Posterior vena cava (tissue), 2 donors: ENCODE measurements at regions of chr2 and their contacts with region 1.

Region 1: DNA sequence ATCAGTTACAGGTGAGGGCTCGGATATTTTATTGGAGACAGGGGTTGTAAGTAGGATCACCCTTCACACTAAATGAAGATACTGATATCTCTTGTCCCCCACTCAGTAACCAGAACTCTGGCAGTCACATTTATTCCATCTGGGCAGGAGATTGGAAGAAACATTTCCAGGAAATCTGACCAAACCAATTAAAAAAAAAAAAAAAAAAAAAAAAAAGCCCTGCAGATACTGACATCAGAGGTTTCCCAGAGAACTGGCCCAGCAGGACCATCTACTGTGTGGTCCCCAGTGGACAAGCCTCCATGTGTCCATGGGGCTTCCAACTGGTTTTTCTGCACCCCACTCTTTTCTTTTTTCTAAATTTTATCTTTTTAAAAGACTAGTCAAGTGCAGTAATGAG is 41.3 kb downstream of the SH2D6 start:
- DNase-seq: peak; percentile 32

Region 2: DNA sequence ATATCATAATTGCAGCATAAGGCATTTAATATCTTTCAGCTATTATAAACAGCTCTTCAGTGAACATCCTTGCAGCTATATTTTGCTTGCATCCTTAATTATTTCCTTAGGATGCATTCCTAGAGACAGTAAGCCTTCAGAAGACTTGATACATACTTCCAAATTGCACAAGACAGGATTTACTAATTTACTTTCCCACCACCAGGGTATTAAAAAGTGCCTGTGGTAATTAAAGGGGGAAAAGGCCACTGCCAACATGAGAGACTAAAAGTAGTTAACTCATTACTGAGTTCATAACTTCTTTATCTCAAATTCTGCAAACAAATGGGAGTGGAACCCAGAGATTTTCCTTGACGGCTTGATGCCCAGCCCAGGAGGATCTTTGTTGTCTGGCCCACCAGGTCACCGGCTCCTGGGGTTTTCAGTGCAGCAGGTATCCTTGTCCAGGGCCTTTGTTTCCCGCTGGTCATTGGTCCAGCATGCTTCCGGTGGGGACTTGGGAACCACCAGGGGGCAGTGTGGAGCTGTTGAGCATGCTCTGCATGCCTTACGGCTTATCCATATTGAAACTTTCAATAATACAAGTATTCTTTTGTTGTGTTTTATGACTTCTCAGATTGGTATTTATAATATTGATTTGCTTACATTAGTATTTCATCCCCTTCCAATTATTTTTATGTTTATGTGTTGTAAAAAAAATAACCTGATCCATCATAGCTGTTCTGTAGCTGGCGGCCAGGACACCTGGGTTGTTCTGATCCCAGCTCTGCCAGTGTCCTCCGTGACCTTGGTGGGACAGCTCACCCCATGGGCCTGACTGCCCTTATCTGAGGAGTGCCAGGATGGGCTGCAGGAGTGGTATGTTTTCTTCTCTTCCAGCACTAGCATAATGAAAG is 193.4 kb before region 1 on chr2:
- intact Hi-C with region 1: no loop called
- DNase-seq: peak; percentile 92

Region 3: GRCh38 chr2:85485815-85486214 is 26.0 kb after region 1 on chr2:
- intact Hi-C with region 1: no loop called
- DNase-seq: no peak

Region 4: GRCh38 chr2:85506768-85507181 is 47.0 kb after region 1 on chr2:
- intact Hi-C with region 1: loop called in 1 of 2 experiments (anchors 1 kb)
- DNase-seq: no peak

Region 5: DNA sequence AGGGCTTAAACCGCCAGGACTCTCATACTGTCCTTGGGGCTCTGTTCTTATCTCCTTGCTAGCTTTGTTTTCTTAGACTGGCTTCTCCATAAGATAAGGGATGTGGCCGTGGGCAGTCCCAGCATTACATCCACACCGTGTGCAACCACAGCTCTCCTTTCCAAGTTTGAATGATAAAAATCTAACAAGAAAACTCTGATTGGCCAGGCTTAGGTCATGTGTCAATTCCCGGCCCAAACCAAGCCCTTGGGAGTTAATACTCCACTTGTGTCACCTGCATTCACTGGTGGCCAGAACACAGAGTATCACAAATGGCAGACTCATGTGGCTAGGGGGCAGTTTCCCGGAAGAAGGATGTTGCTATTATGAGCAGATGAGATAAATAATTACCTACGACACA is 938.2 kb after region 1 on chr2:
- intact Hi-C with region 1: no loop called
- DNase-seq: no peak